ENCODE measurements at regions of chr9 and their contacts with region 1.

Region 1: DNA sequence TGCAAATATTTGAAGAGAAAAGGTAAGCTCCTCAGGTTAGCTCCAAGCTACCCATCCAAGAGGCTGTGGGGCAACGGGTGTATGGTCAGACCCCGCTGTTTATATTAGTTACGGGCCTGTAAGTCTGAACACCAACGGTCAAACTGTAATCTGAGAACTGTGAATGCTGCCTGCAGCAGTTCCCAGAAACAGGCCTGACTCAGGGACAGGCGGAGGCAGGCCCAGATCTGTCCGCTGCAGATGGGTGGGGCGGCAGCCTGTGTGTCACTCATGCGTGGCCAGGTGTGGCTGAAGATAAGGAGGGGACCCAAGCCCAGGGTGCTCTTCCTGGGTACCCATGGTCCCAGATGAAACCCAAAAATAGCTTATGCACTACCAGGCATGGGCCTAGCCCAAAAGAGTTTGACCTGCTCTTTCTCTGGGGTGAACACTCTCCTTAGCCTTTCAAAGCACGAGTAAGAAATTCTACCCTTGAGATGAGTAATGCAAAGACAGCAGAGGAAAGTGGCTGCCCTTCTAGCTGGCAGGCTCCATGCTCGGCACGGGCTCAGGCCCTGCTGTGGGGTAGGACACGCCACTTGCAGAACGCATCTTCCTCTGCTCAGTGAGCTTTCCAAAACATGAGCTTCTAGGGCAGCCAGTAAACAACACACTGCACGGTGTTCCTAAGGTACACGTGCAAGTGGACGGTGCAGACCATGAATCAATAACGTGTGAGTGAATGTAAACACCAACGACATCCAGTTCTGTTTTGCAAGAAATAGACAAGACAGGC is 9.1 kb downstream of the UBAC1 start:
- DNase-seq: no peak
- ATAC-seq: peak in 1 of 4 donors; percentile 16
- H3K4me3 ChIP-seq: no peak overlapping the region
- H3K27ac ChIP-seq: no peak overlapping the region
- H3K4me1 ChIP-seq: peaks cover 0 to 29% (median 8%) of the 10 kb centered on the region in 12 donors
- H3K27me3 ChIP-seq: no peaks in the 10 kb centered on the region
- CTCF ChIP-seq: no peak
- POLR2A ChIP-seq: no peak

Region 2: GRCh38 chr9:135602789-135603481 is 349.1 kb before region 1 on chr9:
- intact Hi-C with region 1: loop called in 1 of 10 experiments (anchors 10 kb)
- DNase-seq: peak in 3 of 5 donors; percentile 21 to 46 (median 25)
- ATAC-seq: peak; percentile 26 to 50 (median 26)
- H3K4me3 ChIP-seq: no peak overlapping the region
- H3K27ac ChIP-seq: no peak overlapping the region
- H3K4me1 ChIP-seq: no peaks in the 10 kb centered on the region
- H3K27me3 ChIP-seq: peaks cover 0 to 13% (median 2%) of the 10 kb centered on the region in 9 donors
- CTCF ChIP-seq: peak; percentile 61 to 87 (median 70)
- POLR2A ChIP-seq: no peak

Region 3: GRCh38 chr9:135701959-135702721 is 249.9 kb before region 1 on chr9 and contains the start of gene KCNT1:
- intact Hi-C with region 1: loop called in 2 of 10 experiments (anchors 5 to 10 kb)
- DNase-seq: peak in 2 of 5 donors; percentile 31 to 42
- ATAC-seq: peak in 2 of 4 donors; percentile 37 to 63
- H3K4me3 ChIP-seq: peak within 1 kb of the TSS in 7 of 12 donors; percentile 10 to 37 (median 21)
- H3K27ac ChIP-seq: no peak within 1 kb of the TSS
- H3K4me1 ChIP-seq: peaks cover 0 to 30% (median 10%) of the 10 kb centered on the region in 12 donors
- H3K27me3 ChIP-seq: peaks cover 0 to 45% (median 18%) of the 10 kb centered on the region in 9 donors
- CTCF ChIP-seq: peak; percentile 75 to 98 (median 90)
- POLR2A ChIP-seq: no peak
- total RNA-seq, gene KCNT1: 0.50 to 7.4 (median 2.6) TPM

Region 4: DNA sequence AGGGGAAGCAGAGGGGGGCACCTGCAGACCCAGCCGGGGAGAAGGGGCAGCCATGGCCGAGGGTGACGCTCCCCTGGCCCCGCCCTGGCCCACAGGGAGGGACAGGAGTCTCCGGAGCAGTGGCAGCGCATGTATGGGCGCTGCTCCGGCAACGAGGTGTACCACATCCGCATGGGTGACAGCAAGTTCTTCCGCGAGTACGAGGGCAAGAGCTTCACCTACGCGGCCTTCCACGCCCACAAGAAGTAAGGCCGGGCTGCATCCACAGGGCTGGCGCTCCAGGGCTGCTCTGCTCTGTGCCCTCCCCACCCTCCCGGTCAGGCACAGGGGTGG is 181.9 kb before region 1 on chr9:
- intact Hi-C with region 1: no loop called
- DNase-seq: no peak
- ATAC-seq: no peak
- H3K4me3 ChIP-seq: no peak overlapping the region
- H3K27ac ChIP-seq: no peak overlapping the region
- H3K4me1 ChIP-seq: no peaks in the 10 kb centered on the region
- H3K27me3 ChIP-seq: peaks cover 0 to 4% (median 0%) of the 10 kb centered on the region in 9 donors
- CTCF ChIP-seq: no peak
- POLR2A ChIP-seq: no peak

Region 5: DNA sequence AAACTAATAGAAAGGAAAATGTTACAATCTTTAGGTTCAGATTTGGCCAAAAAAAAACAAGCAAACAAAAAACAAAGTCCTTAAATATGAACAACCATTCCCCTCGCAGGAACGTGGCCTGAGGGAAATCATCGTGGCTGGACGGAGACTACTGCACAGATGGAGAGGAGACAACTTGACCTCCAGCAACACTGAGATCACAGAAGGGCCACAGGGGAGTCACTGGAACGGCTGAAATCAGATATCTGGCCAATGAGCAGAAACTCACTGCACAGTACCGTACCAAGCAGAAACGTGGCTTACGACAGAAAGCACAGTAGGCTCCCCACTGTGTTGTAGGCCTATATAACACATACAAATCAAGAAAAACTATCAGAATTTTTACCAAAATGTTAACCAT is 72.5 kb before region 1 on chr9:
- intact Hi-C with region 1: loop called in 1 of 10 experiments (anchors 10 kb)
- DNase-seq: peak in 1 of 5 donors; percentile 38
- ATAC-seq: peak in 3 of 4 donors; percentile 51 to 76 (median 70)
- H3K4me3 ChIP-seq: no peak overlapping the region
- H3K27ac ChIP-seq: no peak overlapping the region
- H3K4me1 ChIP-seq: peaks cover 0 to 24% (median 6%) of the 10 kb centered on the region in 12 donors
- H3K27me3 ChIP-seq: no peaks in the 10 kb centered on the region
- CTCF ChIP-seq: no peak
- POLR2A ChIP-seq: no peak

Region 6: DNA sequence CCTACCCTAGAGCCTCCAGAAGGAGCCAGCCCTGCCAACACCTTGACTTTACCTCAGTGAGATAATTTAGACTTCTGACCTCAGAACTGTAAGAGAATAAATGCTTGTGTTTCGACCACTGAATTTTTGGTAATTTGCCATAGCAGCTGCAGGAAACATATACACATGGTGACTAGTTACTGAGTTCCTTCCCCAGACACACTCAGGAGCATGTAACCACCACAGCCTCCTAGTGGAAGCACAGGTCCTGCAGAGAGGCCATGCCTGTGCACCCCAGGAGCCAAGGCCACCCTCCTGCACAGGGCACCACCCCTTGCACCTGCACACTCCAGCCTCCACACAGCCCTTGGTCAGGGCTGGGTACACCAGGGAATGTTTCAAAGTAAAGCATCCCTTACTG is 37.2 kb before region 1 on chr9:
- intact Hi-C with region 1: loop called in 1 of 10 experiments (anchors 5 kb)
- DNase-seq: no peak
- ATAC-seq: peak in 1 of 4 donors; percentile 34
- H3K4me3 ChIP-seq: no peak overlapping the region
- H3K27ac ChIP-seq: no peak overlapping the region
- H3K4me1 ChIP-seq: peaks cover 0 to under 1% (median 0%) of the 10 kb centered on the region in 12 donors
- H3K27me3 ChIP-seq: no peaks in the 10 kb centered on the region
- CTCF ChIP-seq: no peak
- POLR2A ChIP-seq: no peak

Region 7: DNA sequence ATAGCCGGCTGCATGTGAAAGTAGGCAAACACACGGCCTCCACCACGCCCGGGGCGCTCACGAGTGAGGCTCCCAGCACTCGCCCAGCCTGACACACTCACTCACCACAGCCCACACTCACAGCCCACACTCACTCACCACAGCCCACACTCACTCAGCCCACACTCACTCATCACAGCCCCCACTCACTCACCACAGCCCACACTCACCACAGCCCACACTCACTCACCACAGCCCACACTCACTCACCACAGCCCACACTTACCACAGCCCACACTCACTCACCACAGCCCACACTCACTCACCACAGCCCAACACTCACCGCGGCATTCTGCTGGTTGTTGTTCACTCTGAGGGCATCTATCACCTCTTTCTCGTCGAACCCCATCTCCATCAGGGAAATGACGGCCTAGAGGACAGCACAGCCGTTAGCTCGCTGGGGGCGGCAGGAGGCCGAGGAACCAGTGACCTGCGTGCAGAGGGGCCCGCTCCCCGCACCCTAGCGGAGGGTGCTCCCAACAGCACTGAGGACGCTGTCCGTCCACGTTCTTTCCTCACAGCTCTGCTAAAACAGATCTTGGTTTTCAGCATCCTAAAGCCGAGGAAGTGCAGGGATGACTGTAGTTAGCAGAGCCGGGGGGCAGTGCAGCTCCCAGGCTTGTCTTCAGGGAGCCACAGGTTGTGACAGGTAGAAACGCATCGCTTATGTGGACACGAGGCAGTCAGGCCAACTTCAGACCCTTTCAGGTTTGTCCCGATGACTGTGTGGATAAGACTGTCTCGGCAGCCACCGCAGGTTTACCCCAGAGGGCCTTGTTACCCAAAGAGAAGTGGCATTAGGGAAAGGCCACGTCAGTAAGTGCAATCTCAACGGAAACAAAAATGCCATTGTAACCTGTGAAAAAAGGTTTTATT is 12.5 kb before region 1 on chr9:
- intact Hi-C with region 1: no loop called
- DNase-seq: peak in 2 of 5 donors; percentile 6 to 13
- ATAC-seq: no peak
- H3K4me3 ChIP-seq: no peak overlapping the region
- H3K27ac ChIP-seq: no peak overlapping the region
- H3K4me1 ChIP-seq: peaks cover 0 to 20% (median 11%) of the 10 kb centered on the region in 12 donors
- H3K27me3 ChIP-seq: no peaks in the 10 kb centered on the region
- CTCF ChIP-seq: no peak
- POLR2A ChIP-seq: no peak

Region 8: DNA sequence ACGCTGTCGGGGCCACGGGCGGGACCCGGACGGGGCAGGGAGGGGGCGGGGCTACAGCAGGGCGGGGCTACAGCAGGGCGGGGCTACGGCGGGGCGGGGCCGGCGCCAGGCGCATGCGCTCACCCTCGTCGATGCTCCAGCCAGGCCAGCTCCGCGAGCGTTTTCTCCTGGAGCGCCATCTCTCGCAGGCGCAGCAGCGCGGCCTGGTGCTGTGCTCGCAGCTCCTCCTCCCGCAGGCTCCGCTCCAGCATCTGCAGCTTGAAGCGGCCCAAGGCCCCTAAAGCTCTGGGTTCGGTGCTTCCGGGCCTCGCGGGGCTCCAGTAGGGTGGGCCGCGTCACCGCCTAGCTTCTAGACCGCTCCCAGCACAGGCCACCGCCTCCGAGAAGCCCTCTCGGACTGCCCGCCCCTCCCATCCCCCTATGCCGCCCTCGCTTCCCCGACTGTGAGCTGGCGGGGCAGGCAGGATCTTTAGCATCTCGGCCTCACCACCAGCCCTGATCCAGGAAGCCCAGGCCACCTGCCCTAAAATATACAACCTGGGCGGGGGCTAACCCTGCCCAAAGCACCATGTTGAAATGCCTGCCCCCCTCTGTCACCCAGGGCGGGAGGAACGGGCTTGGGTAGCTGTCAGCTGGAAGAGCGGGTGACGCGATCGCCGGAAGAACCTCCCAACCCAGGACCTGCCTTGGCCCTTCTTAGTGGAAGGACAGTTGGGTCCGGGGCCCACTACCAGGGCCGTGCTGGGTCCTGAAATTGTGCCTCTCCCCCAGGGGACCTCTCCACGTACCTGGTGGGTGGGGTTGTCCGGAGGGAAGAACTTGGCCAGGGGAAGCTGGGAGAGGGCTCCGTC is 315.4 kb after region 1 on chr9:
- intact Hi-C with region 1: no loop called
- DNase-seq: peak; percentile 71 to 94 (median 85)
- ATAC-seq: peak; percentile 71 to 97 (median 96)
- H3K4me3 ChIP-seq: peak overlapping the region; percentile 8 to 67 (median 48)
- H3K27ac ChIP-seq: peak overlapping the region in 4 of 12 donors; percentile 39 to 64 (median 58)
- H3K4me1 ChIP-seq: peaks cover 0 to 10% (median 6%) of the 10 kb centered on the region in 12 donors
- H3K27me3 ChIP-seq: peaks cover 0 to 12% (median 0%) of the 10 kb centered on the region in 9 donors
- CTCF ChIP-seq: peak in 6 of 12 donors; percentile 19 to 47 (median 32)
- POLR2A ChIP-seq: peak in 1 of 2 donors; percentile 34